CD8-positive, alpha-beta T cell (primary cell): ENCODE measurements at regions of chr2 and their contacts with region 1.

Region 1: DNA sequence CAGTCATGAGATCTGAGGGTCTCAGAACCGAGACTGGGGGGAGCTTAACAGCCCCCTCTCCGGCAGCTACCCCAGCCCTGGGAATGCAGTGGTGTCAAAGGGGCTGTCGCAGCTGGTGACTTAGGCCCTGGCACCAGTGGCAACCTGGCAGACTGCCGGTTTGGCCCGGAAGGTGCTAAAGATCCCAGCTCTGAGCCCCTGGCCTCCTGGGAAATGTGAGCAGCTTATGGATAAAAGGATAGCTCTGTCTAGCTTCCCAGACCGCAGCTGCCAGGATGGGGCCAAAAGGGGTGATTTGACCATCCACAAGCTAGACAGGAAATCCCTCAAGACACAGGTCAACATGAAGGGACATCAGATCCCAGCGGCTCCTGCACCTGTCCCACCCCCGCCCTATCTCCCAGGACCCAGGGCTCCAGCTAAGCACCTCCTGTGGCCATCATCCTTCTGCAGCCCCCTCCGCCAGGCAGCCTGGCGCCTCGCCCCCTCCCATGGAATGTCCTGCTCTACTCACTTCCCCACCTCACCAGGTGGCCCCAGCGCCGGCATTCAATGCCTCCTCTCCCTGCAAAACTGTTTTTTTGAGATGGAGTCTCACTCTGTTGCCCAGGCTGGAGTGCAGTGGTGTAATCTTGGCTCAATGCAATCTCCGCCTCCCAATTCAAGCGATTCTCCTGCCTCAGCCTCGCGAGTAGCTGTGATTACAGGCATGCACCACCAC is 33.2 kb upstream of the EFHD1 start:
- DNase-seq: no peak
- ATAC-seq: no peak
- H3K4me3 ChIP-seq: no peak overlapping the region
- H3K4me3 Mint-ChIP-seq: no peak overlapping the region
- H3K27ac ChIP-seq: no peak overlapping the region
- H3K27ac Mint-ChIP-seq: no peak overlapping the region
- H3K4me1 ChIP-seq: no peaks in the 10 kb centered on the region
- H3K4me1 Mint-ChIP-seq: no peaks in the 10 kb centered on the region
- H3K27me3 ChIP-seq: no peaks in the 10 kb centered on the region
- H3K27me3 Mint-ChIP-seq: peaks cover 5% of the 10 kb centered on the region
- CTCF ChIP-seq: no peak

Region 2: DNA sequence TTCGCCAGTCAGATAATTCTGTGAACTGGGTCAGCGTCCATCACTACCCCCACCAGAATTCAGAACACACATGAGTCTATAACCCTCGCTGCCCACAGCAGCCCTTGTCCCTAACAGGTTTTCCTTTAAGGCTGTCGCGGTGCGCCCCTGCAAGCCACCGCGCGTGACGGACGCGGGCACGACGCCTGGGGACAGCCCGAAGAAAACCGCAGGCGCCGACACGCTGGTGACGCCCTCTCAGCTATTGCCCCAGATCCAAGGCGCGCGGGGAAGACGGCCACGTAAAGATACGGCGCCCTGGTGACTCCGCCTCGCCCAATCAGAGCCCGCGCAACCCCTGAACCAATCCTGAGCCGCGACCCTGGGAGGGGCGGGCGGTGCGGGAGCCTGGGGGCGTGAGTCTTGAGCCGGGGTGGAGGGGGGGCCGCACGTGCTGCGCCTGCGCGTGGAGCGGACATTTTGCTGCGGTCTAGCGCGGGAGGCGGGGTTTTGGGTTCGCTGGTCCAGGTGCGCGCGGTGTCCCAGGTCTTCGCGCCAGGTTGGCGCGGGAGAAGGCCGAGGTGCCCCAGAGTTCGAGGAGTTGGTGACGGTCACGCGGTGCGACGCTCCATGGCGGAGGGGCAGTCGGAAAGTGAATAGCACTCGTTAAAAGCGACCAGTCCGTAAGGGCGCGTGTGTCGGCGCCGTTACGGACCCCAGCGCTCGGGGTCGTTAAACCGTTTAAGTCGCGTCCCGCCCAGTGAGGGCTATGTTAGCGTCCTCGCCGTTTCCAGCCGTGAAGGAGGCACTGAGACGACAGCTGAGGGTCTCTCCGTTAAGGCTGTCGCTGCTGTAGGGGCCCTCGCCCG is 1085.9 kb before region 1 on chr2:
- CTCF ChIA-PET with region 1: no interaction called
- POLR2A ChIA-PET with region 1: no interaction called
- intact Hi-C with region 1: no loop called
- DNase-seq: peak; percentile 96 to 99 (median 98)
- ATAC-seq: peak; percentile 97
- H3K4me3 ChIP-seq: peak overlapping the region; percentile 86 to 88
- H3K4me3 Mint-ChIP-seq: peak overlapping the region; percentile 90
- H3K27ac ChIP-seq: peak overlapping the region; percentile 85 to 94
- H3K27ac Mint-ChIP-seq: peak overlapping the region; percentile 97
- H3K4me1 ChIP-seq: peaks cover 13% of the 10 kb centered on the region
- H3K4me1 Mint-ChIP-seq: peaks cover 18% of the 10 kb centered on the region
- H3K27me3 ChIP-seq: no peaks in the 10 kb centered on the region
- H3K27me3 Mint-ChIP-seq: no peaks in the 10 kb centered on the region
- CTCF ChIP-seq: no peak

Region 3: DNA sequence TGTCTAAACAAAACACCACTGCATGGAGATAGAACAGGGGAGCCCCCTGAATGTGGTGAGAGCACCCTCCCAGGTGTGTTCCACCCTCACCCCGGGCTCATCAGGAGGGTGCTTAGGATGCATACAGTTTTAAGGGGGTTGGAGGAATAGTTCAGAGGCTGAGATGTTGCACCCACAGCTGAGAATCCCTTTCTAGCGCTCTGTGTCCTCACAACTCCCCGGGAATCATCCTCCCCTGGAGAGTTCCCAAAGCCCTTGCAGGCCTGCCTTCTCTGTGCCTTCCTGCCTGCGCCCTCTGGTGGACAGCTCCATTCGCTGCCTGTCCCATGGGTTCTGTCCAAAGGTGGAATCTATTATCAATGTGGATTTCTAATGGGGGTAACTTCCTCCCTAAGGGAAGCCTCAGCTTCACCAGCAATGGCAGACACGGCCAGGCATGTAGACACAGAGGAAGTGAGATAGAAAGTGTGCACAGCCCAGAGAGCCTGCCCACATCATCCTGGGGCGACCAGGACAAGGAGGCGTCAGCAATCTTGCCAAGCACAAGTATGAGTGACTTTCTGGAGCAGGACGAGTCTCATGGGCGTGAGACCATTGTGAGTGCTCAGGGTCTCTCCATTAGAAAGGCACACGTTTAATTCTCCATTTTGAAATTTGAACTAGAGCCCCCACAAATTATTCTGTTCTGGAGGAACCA is 1111.2 kb after region 1 on chr2:
- CTCF ChIA-PET with region 1: no interaction called
- POLR2A ChIA-PET with region 1: no interaction called
- intact Hi-C with region 1: loop called in 1 of 2 experiments (anchors 10 kb)
- DNase-seq: peak; percentile 25 to 76 (median 60)
- ATAC-seq: peak; percentile 57
- H3K4me3 ChIP-seq: no peak overlapping the region
- H3K4me3 Mint-ChIP-seq: no peak overlapping the region
- H3K27ac ChIP-seq: no peak overlapping the region
- H3K27ac Mint-ChIP-seq: no peak overlapping the region
- H3K4me1 ChIP-seq: no peaks in the 10 kb centered on the region
- H3K4me1 Mint-ChIP-seq: no peaks in the 10 kb centered on the region
- H3K27me3 ChIP-seq: no peaks in the 10 kb centered on the region
- H3K27me3 Mint-ChIP-seq: peaks cover 19% of the 10 kb centered on the region
- CTCF ChIP-seq: peak; percentile 68